Activated CD4-positive, alpha-beta T cell treated with anti-CD3 and anti-CD28 coated beads, Interleukin-2, amount 10 ng/mL, durations not matched to agents 7 days and 5 days (primary cell): ENCODE measurements at regions of chr22 and their contacts with region 1.

Region 1: DNA sequence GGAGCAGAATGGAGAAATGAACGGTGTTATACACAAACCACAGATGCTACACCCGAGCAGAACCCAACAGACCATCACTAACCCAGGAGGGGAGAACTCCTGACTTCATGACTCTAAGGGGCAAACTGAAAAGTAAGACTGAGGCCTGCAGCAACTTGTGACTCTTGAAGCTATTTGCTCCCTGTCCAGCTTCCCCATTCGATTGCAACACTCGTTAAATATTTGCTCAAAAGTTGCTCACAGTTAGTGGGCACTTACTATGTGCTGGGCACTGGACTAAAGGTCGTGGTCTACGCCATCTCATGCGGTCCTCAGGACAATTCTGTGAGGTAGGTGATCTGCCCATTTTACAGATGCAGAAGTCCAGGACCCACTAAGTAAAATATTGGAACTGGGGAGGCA is 9.5 kb upstream of the ADA2 start:
- DNase-seq: no peak
- H3K4me3 Mint-ChIP-seq: no peak overlapping the region
- H3K27ac Mint-ChIP-seq: no peak overlapping the region
- H3K4me1 Mint-ChIP-seq: no peaks in the 10 kb centered on the region
- H3K27me3 Mint-ChIP-seq: peaks cover 4% of the 10 kb centered on the region

Region 2: DNA sequence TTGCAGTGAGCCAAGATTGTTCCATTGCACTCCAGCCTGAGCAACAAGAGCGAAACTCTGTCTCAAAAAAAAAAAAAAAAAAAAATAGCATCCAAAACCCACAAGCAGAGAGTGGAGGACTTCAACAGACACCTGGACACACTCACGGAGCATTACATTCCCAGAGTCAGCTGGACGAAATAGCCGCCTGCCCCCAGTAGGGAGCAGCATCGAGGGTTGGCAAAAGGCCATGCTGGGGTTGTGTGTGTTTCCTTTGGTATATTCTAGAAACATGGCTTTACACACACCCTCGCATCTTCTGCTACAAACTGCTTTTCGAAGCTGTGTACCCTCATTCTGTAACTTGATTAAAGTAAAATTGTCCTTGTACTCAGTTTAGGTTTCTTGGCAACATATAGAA is 14.8 kb before region 1 on chr22:
- CTCF ChIA-PET with region 1: interaction called, 15 read pairs
- POLR2A ChIA-PET with region 1: interaction called, 3 read pairs
- DNase-seq: peak; percentile 49
- H3K4me3 Mint-ChIP-seq: no peak overlapping the region
- H3K27ac Mint-ChIP-seq: peak overlapping the region; percentile 60
- H3K4me1 Mint-ChIP-seq: peaks cover 45% of the 10 kb centered on the region
- H3K27me3 Mint-ChIP-seq: no peaks in the 10 kb centered on the region

Region 3: GRCh38 chr22:17359501-17359900 is 130.8 kb after region 1 on chr22:
- CTCF ChIA-PET with region 1: no interaction called
- POLR2A ChIA-PET with region 1: interaction called, 13 read pairs
- DNase-seq: no peak
- H3K4me3 Mint-ChIP-seq: no peak overlapping the region
- H3K27ac Mint-ChIP-seq: no peak overlapping the region
- H3K4me1 Mint-ChIP-seq: no peaks in the 10 kb centered on the region
- H3K27me3 Mint-ChIP-seq: peaks cover 3% of the 10 kb centered on the region